ENCODE measurements at regions of chr11 and their contacts with region 1.

Region 1: DNA sequence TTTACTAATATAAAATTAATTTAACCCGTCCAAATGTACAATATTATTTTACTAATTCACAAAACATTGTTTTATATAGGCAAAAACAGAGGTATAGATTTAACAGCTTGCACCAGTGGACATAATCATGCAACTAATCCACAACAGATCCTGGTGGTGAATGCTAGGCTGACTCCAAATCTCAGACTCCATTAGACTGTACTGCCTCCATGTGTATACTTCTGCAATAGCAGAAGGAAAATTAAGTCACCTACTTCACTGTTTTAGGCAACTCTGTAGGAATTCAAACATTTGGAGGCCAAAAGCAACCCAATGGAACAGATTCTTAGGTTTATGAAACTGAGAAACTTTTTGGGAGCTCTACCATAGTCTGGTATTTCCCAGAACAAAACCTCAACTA is 30.0 kb upstream of the RAB39A start:
- DNase-seq: peak in 1 of 2 experiments; percentile 52
- H3K4me3 ChIP-seq: no peak overlapping the region
- H3K4me3 Mint-ChIP-seq: no peak overlapping the region
- H3K27ac Mint-ChIP-seq: no peak overlapping the region
- H3K4me1 ChIP-seq: peaks cover 4% of the 10 kb centered on the region; the same call in 1 of the 2 replicates
- H3K4me1 Mint-ChIP-seq: no peaks in the 10 kb centered on the region
- H3K27me3 ChIP-seq: no peaks in the 10 kb centered on the region
- H3K27me3 Mint-ChIP-seq: peaks cover 11% of the 10 kb centered on the region
- CTCF ChIP-seq: peak; percentile 70 to 75

Region 2: DNA sequence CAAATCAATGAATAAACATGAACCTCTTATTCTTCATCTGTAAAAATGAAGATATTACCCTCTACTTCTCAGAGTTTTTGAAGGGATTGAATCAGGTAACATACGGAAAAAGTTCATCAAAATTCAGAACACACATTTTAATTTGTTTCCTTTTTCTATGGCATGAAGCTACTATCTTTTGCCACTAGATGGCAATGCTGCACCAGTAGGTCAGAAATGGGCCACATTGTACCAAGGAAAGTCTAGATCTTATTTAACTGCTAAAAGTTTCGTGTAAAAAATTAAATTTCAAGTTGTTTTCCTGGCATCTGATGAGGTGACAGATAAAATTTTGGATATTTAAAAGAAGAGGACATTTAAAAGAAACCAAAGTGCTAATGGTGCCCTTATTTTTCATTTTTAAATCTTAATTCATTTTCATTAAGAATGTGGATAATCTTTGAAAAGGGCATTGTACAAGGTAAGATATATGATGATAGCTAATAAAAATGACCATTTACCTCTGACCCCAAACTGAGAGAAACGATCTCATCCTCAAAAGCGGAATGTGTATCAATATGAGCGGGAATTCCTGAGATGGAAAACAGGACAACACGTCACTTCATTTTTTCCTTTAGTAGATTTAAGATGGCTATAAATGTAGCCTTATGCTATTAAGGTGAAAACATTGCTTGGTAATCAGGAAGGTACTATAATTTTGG is 348.9 kb before region 1 on chr11:
- CTCF ChIA-PET with region 1: no interaction called
- POLR2A ChIA-PET with region 1: no interaction called
- intact Hi-C with region 1: loop called (anchors 1 kb)
- DNase-seq: peak in 1 of 2 experiments; percentile 50
- H3K4me3 ChIP-seq: no peak overlapping the region
- H3K4me3 Mint-ChIP-seq: no peak overlapping the region
- H3K27ac Mint-ChIP-seq: no peak overlapping the region
- H3K4me1 ChIP-seq: 0 out of 2 replicates have a peak, but pooled peaks cover 8% of the 10 kb centered on the region
- H3K4me1 Mint-ChIP-seq: peaks cover 7% of the 10 kb centered on the region
- H3K27me3 ChIP-seq: no peaks in the 10 kb centered on the region
- H3K27me3 Mint-ChIP-seq: no peaks in the 10 kb centered on the region
- CTCF ChIP-seq: peak; percentile 88 to 94

Region 3: DNA sequence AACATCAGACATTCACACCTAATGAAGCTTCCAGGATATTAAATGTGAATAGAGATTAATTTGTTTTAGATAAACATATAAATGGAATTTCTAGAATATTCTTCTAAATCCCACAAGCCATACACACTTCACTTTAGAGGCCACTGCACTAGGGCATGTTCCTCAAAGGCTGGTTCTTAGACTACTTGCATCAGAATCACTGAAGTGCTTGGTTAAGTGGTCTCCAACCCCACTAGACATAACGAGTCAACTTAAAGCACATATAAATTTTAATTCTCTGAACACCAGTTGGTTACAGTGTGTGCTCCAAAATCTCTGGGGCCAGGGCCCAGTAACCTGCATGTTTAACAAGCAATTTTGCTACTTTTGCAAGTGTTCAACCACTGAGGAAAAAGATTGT is 324.8 kb before region 1 on chr11:
- CTCF ChIA-PET with region 1: no interaction called
- POLR2A ChIA-PET with region 1: no interaction called
- intact Hi-C with region 1: loop called (anchors 1 kb)
- DNase-seq: no peak
- H3K4me3 ChIP-seq: no peak overlapping the region
- H3K4me3 Mint-ChIP-seq: no peak overlapping the region
- H3K27ac Mint-ChIP-seq: no peak overlapping the region
- H3K4me1 ChIP-seq: no peaks in the 10 kb centered on the region
- H3K4me1 Mint-ChIP-seq: no peaks in the 10 kb centered on the region
- H3K27me3 ChIP-seq: peaks cover 1% of the 10 kb centered on the region; the same call in 1 of the 2 replicates
- H3K27me3 Mint-ChIP-seq: peaks cover 9% of the 10 kb centered on the region
- CTCF ChIP-seq: no peak

Region 4: DNA sequence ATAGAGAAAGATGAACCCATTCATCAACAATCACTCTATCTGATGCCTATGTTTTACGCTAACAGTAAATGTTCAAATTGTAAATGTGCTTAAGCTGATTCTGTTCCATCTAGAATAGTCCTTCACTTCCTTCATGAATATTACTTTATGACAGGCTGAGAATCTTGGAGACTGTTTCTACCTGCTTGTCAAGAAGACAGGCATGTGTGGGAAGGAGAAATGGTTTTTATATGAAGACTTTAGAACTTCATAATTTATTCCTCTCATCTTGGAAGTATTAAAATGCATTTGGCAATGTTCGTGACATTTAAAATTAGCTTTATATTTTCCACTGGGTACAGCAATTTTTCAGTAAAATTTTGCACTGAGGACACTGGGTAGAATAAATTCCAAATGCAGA is 266.3 kb before region 1 on chr11:
- CTCF ChIA-PET with region 1: no interaction called
- POLR2A ChIA-PET with region 1: no interaction called
- intact Hi-C with region 1: no loop called
- DNase-seq: no peak
- H3K4me3 ChIP-seq: no peak overlapping the region
- H3K4me3 Mint-ChIP-seq: no peak overlapping the region
- H3K27ac Mint-ChIP-seq: no peak overlapping the region
- H3K4me1 ChIP-seq: no peaks in the 10 kb centered on the region
- H3K4me1 Mint-ChIP-seq: no peaks in the 10 kb centered on the region
- H3K27me3 ChIP-seq: peaks cover 2% of the 10 kb centered on the region
- H3K27me3 Mint-ChIP-seq: peaks cover 35% of the 10 kb centered on the region
- CTCF ChIP-seq: no peak

Region 5: GRCh38 chr11:107741044-107741823 is 157.0 kb before region 1 on chr11:
- CTCF ChIA-PET with region 1: interaction called, 7 read pairs
- POLR2A ChIA-PET with region 1: no interaction called
- intact Hi-C with region 1: loop called (anchors 1 kb)
- DNase-seq: peak in 1 of 2 experiments; percentile 37
- H3K4me3 ChIP-seq: no peak overlapping the region
- H3K4me3 Mint-ChIP-seq: no peak overlapping the region
- H3K27ac Mint-ChIP-seq: no peak overlapping the region
- H3K4me1 ChIP-seq: no peaks in the 10 kb centered on the region
- H3K4me1 Mint-ChIP-seq: no peaks in the 10 kb centered on the region
- H3K27me3 ChIP-seq: no peaks in the 10 kb centered on the region
- H3K27me3 Mint-ChIP-seq: peaks cover 16% of the 10 kb centered on the region
- CTCF ChIP-seq: peak; percentile 82 to 89

Region 6: DNA sequence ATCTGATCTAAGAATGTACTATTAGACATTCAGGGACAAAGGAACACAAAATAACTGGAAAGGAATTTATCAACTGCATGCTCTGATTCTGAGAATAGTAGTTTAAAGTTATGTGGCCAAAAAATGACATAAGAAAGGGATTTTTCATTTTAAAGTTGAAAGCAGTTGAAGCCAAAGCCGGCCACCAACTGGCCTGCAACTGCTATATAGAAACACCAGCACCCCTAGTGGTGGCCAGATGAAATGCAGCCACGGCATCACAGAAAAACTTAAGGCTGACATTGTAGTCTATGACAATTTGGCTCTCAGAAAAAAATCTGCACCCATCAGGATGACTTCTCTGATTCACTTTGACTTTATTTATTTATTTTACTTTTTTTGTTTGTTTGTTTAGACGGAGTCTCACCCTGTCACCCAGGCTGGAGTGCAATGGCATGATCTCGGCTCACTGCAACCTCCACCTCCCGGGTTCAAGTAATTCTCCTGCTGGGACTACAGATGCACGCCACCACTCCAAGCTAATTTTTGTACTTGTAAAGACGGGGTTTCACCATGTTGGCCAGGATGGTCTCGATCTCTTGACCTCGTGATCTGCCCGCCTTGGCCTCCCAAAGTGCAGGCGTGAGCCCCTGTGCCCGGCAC is 98.9 kb before region 1 on chr11:
- CTCF ChIA-PET with region 1: no interaction called
- POLR2A ChIA-PET with region 1: no interaction called
- intact Hi-C with region 1: loop called (anchors 1 kb)
- DNase-seq: peak; percentile 82 to 85
- H3K4me3 ChIP-seq: no peak overlapping the region
- H3K4me3 Mint-ChIP-seq: no peak overlapping the region
- H3K27ac Mint-ChIP-seq: no peak overlapping the region
- H3K4me1 ChIP-seq: peaks cover 4% of the 10 kb centered on the region
- H3K4me1 Mint-ChIP-seq: no peaks in the 10 kb centered on the region
- H3K27me3 ChIP-seq: no peaks in the 10 kb centered on the region
- H3K27me3 Mint-ChIP-seq: no peaks in the 10 kb centered on the region
- CTCF ChIP-seq: peak; percentile 98 to 99

Region 7: DNA sequence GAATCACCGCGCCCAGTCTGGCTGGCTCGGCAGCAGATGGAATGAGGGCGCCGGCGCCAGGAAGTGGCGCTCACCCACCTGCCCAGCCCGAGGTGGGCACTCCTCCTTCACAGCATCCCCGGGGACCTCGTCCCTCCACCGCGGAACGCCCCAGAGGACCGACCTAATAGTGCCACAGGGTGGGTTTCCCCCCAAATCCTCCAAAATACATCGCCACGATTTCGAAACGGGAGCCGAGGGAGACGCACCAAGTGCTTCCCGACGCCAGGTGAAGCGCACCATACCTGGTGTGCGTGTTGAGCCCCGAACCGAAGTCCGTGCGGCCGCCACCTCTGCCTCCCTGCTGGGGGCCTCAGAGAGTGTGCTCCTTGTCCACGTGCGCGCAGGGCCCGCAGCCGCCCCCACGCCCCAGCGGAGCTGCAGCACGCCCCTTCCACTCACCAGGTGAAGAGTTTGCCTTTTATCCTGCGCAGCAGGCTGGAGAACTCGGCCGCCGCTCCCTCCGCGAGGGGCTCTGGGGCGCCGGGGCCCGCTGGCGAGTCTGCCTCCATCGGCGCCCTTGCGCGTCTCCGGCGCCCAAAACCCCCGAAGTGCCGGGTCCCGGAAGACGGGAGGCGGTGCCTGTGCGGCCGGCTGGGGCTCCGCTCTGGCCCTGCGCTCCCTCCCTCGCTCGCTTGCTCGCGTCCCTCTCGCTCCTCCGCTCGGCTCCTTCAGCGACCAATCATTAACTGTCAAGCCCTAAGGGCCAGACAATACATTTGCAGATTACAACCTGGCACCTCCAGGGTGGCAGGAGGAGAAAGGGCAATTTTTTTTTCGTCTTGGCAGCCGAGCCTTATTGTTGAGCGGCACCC is 39.8 kb before region 1 on chr11 and contains the start of gene SLC35F2:
- CTCF ChIA-PET with region 1: interaction called, 7 read pairs
- POLR2A ChIA-PET with region 1: no interaction called
- intact Hi-C with region 1: loop called (anchors 1 kb)
- DNase-seq: peak; percentile 90 to 91
- H3K4me3 ChIP-seq: peak within 1 kb of the TSS; percentile 50
- H3K4me3 Mint-ChIP-seq: peak within 1 kb of the TSS; percentile 93
- H3K27ac Mint-ChIP-seq: peak within 1 kb of the TSS; percentile 85
- H3K4me1 ChIP-seq: peaks cover 5% of the 10 kb centered on the region
- H3K4me1 Mint-ChIP-seq: peaks cover 7% of the 10 kb centered on the region
- H3K27me3 ChIP-seq: no peaks in the 10 kb centered on the region
- H3K27me3 Mint-ChIP-seq: no peaks in the 10 kb centered on the region
- CTCF ChIP-seq: peak in 1 of 2 experiments; percentile 24
- total RNA-seq, gene SLC35F2: 42.5 and 44.9 TPM in 2 replicates